ENCODE measurements at regions of chr11 and their contacts with region 1.

Region 1: GRCh38 chr11:100980156-100980555 is 149.5 kb downstream of the PGR start:
- DNase-seq: no peak
- H3K4me3 ChIP-seq: no peak overlapping the region
- H3K27ac ChIP-seq: no peak overlapping the region
- H3K4me1 ChIP-seq: no peaks in the 10 kb centered on the region
- H3K27me3 ChIP-seq: no peaks in the 10 kb centered on the region
- CTCF ChIP-seq: peak in 3 of 4 experiments; percentile 12 to 54 (median 20)
- POLR2A ChIP-seq: no peak

Region 2: DNA sequence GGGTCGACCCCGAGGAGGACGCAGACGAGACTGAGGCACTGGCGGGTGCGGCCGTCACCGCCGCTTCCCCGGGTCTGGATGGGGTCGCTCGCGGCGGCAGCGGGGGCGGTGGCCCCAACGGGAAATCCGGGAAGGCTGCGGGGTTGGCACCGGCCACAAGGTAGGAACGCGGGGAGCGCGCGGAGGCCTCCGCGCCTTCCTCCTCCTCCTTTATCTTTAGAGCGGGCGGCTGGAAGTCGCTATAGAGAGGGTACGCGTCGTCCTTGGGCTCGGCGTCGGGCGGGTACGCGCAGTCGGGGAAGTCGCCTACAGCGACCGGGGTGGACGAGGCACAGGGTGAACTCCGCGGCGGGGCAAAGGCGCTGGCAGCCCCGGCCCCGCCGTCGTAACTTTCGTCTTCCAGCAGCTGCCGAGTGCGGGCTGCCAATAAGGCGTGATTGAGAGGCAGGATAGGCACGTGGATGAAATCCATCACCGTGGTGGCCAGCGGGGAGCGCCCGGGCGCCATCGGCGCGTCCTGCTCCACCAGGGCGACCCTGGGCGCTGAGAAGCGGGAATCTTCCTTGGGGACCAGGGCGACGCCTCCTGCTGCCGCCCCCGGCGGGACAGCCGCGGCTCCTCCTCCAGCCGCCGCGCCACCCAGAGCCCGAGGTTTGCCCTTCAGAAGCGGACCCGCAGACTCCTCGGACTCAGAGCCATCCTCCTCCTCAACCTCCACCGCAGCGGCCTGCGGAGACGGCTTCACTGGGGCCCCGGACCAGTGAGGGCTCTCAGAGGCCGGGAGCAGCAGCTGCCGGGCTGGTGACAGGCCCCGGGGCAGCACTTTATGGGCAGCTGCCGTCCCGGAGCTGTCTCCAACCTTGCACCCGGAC is 147.8 kb after region 1 on chr11:
- intact Hi-C with region 1: loop called (anchors 10 kb)
- DNase-seq: no peak
- H3K4me3 ChIP-seq: peak overlapping the region; percentile 33 to 36
- H3K27ac ChIP-seq: peak overlapping the region; percentile 51 to 70
- H3K4me1 ChIP-seq: no peaks in the 10 kb centered on the region
- H3K27me3 ChIP-seq: peaks cover 2% of the 10 kb centered on the region
- CTCF ChIP-seq: peak in 1 of 4 experiments; percentile 8
- POLR2A ChIP-seq: no peak

Region 3: GRCh38 chr11:101158119-101158518 is 178.0 kb after region 1 on chr11:
- intact Hi-C with region 1: no loop called
- DNase-seq: no peak
- H3K4me3 ChIP-seq: no peak overlapping the region
- H3K27ac ChIP-seq: no peak overlapping the region
- H3K4me1 ChIP-seq: no peaks in the 10 kb centered on the region
- H3K27me3 ChIP-seq: no peaks in the 10 kb centered on the region
- CTCF ChIP-seq: no peak
- POLR2A ChIP-seq: no peak